Activated B cell treated with CpG ODN at 0.5 μM for 24 hours (primary cell): ENCODE measurements at regions of chr7 and their contacts with region 1.

Region 1: GRCh38 chr7:134113655-134114054 is 13.5 kb upstream of the LRGUK start:
- DNase-seq: no peak
- ATAC-seq: no peak
- H3K4me3 Mint-ChIP-seq: no peak overlapping the region
- H3K27ac Mint-ChIP-seq: no peak overlapping the region
- H3K4me1 Mint-ChIP-seq: no peaks in the 10 kb centered on the region
- H3K27me3 Mint-ChIP-seq: no peaks in the 10 kb centered on the region
- CTCF ChIP-seq: no peak

Region 2: GRCh38 chr7:133623721-133624120 is 489.9 kb before region 1 on chr7:
- CTCF ChIA-PET with region 1: no interaction called
- POLR2A ChIA-PET with region 1: no interaction called
- intact Hi-C with region 1: no loop called
- DNase-seq: no peak
- ATAC-seq: no peak
- H3K4me3 Mint-ChIP-seq: no peak overlapping the region
- H3K27ac Mint-ChIP-seq: no peak overlapping the region
- H3K4me1 Mint-ChIP-seq: no peaks in the 10 kb centered on the region
- H3K27me3 Mint-ChIP-seq: no peaks in the 10 kb centered on the region
- CTCF ChIP-seq: no peak

Region 3: GRCh38 chr7:134101716-134102115 is 11.9 kb before region 1 on chr7:
- CTCF ChIA-PET with region 1: no interaction called
- POLR2A ChIA-PET with region 1: no interaction called
- intact Hi-C with region 1: loop called (anchors 1 kb)
- DNase-seq: no peak
- ATAC-seq: no peak
- H3K4me3 Mint-ChIP-seq: no peak overlapping the region
- H3K27ac Mint-ChIP-seq: no peak overlapping the region
- H3K4me1 Mint-ChIP-seq: peaks cover 1% of the 10 kb centered on the region
- H3K27me3 Mint-ChIP-seq: no peaks in the 10 kb centered on the region
- CTCF ChIP-seq: no peak